Activated B cell treated with CpG ODN at 0.5 μM for 24 hours (primary cell): ENCODE measurements at regions of chr12 and their contacts with region 1.

Region 1: DNA sequence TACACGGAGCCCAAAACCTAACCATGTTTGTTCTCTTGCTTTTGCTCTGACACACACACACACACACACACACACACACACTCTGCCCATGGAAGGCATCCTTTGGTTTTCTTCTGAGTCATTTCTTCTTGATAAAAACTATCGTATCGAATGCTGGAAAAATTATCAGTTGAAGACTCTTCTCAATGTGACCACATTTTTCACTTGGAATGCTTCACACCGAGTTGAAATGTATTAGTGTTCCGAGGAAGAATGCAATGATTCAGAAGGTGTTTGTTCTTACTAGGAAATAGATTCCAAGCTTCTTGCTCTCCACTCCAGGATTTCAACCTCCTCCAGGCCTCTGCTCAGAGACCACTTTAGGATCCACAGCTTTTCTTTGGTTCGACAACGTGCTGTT is 226.3 kb downstream of the MON2 start:
- DNase-seq: no peak
- ATAC-seq: no peak
- H3K4me3 Mint-ChIP-seq: no peak overlapping the region
- H3K27ac Mint-ChIP-seq: no peak overlapping the region
- H3K4me1 Mint-ChIP-seq: no peaks in the 10 kb centered on the region
- H3K27me3 Mint-ChIP-seq: no peaks in the 10 kb centered on the region
- CTCF ChIP-seq: no peak

Region 2: GRCh38 chr12:62631471-62632410 is 61.1 kb before region 1 on chr12:
- CTCF ChIA-PET with region 1: no interaction called
- POLR2A ChIA-PET with region 1: no interaction called
- intact Hi-C with region 1: loop called (anchors 5 kb)
- DNase-seq: peak; percentile 30
- ATAC-seq: peak; percentile 64
- H3K4me3 Mint-ChIP-seq: peak overlapping the region; percentile 85
- H3K27ac Mint-ChIP-seq: no peak overlapping the region
- H3K4me1 Mint-ChIP-seq: peaks cover 12% of the 10 kb centered on the region
- H3K27me3 Mint-ChIP-seq: peaks cover 63% of the 10 kb centered on the region
- CTCF ChIP-seq: no peak

Region 3: DNA sequence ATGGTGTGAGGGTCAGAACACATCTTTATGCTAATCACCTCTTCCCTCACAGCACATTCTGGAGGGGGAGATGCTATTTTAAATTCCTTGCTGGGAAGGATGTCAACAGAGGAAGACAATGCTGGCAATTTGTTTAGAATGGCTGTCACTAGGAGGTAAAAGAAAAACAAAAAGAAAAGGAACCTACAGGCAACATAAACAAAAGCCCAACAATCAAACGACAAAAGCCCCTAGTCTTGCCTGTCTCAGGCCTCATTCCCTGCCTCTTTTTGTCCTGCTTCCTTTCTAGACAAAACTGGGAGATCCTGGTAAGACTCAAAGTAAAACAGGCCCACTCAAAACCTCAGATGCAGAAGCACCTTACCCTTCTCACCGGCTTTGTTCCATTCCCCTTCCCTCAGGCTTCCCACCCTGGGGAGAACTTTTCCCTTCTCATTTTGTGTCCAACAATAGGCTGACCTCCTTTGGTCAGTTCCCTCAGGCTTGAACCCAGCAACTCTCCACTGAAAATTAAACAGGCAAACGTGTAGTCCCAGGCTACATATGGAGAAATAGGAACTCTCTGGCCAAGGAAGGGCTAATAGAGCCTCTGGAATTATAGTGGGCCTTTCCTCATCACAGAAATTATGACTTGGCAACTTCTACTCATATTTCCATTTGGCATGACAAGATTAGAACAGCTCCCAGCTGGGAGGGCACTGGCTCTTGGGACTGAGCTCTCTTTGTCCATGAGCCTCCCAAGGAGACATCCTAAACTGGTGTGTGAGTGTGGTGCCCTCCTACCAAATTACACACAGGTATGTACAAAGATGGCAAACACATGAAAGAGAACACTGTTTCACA is 33.2 kb before region 1 on chr12:
- CTCF ChIA-PET with region 1: no interaction called
- POLR2A ChIA-PET with region 1: no interaction called
- intact Hi-C with region 1: no loop called
- DNase-seq: no peak
- ATAC-seq: no peak
- H3K4me3 Mint-ChIP-seq: no peak overlapping the region
- H3K27ac Mint-ChIP-seq: no peak overlapping the region
- H3K4me1 Mint-ChIP-seq: no peaks in the 10 kb centered on the region
- H3K27me3 Mint-ChIP-seq: no peaks in the 10 kb centered on the region
- CTCF ChIP-seq: no peak

Region 4: GRCh38 chr12:62744551-62744950 is 51.7 kb after region 1 on chr12:
- CTCF ChIA-PET with region 1: no interaction called
- POLR2A ChIA-PET with region 1: no interaction called
- intact Hi-C with region 1: no loop called
- DNase-seq: no peak
- ATAC-seq: no peak
- H3K4me3 Mint-ChIP-seq: no peak overlapping the region
- H3K27ac Mint-ChIP-seq: no peak overlapping the region
- H3K4me1 Mint-ChIP-seq: no peaks in the 10 kb centered on the region
- H3K27me3 Mint-ChIP-seq: no peaks in the 10 kb centered on the region
- CTCF ChIP-seq: no peak